BJ (cell line): ENCODE measurements at regions of chr16 and their contacts with region 1.

Region 1: GRCh38 chr16:27401768-27402568 is at the start of gene IL21R:
- DNase-seq: peak; percentile 26
- H3K4me3 ChIP-seq: no peak within 1 kb of the TSS
- H3K27me3 ChIP-seq: no peaks in the 10 kb centered on the region
- CTCF ChIP-seq: no peak
- polyA plus RNA-seq, gene IL21R: 0.33 and 0.58 TPM in 2 replicates

Region 2: GRCh38 chr16:26189536-26189935 is 1212.4 kb before region 1 on chr16:
- CTCF ChIA-PET with region 1: no interaction called
- POLR2A ChIA-PET with region 1: interaction called, 10 read pairs
- DNase-seq: no peak
- H3K4me3 ChIP-seq: no peak overlapping the region
- H3K27me3 ChIP-seq: no peaks in the 10 kb centered on the region
- CTCF ChIP-seq: no peak